A673 (cell line): ENCODE measurements at regions of chr12 and their contacts with region 1.

Region 1: DNA sequence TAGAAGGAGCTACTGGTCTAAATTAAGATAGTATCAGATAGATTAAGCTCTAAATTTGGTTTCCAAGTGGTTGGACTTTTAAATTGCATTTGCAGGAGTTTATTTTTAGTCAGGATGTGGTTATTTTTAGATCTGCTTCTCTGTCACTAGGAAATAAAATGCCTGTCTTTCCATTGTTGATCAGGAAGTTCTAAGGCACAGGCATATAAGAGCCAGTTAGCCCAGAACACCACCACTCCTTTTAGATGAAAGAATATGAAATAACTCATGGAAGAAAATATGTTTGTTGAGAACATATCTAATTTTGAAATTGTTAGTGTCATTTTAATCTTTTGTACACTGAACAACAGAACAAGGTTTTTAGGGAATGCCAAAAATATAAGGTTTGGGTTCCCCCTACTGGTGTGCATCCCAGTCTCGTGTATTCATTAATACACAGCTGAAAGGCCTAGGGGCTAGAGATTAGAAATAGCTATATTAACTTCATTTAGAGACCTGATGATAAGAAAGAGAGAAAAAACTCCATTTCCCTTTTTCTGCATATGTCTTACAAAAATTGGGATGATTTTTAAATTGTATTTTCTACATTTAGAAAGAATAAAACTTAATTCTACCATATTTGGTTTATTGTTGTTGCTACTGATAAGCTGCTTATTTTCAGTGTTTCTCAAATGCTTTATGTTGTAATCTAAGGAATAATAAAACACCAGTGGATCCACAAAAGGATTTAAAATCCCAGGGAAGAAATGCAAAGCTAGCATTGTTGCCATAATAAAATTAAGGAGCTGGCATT is 67.2 kb downstream of the RIC8B start:
- DNase-seq: peak; percentile 73
- H3K4me3 ChIP-seq: no peak overlapping the region
- H3K27ac ChIP-seq: peak overlapping the region; percentile 67
- H3K4me1 ChIP-seq: peaks cover 28% of the 10 kb centered on the region
- H3K27me3 ChIP-seq: no peaks in the 10 kb centered on the region
- CTCF ChIP-seq: peak; percentile 86

Region 2: GRCh38 chr12:106357549-106358395 is 483.9 kb before region 1 on chr12 and contains the start of gene POLR3B:
- CTCF ChIA-PET with region 1: interaction called, 14 read pairs
- POLR2A ChIA-PET with region 1: no interaction called
- intact Hi-C with region 1: no loop called
- DNase-seq: peak; percentile 97
- H3K4me3 ChIP-seq: peak within 1 kb of the TSS; percentile 70
- H3K27ac ChIP-seq: peak within 1 kb of the TSS; percentile 89
- H3K4me1 ChIP-seq: peaks cover 8% of the 10 kb centered on the region
- H3K27me3 ChIP-seq: no peaks in the 10 kb centered on the region
- CTCF ChIP-seq: peak; percentile 92
- total RNA-seq, gene POLR3B: 13.7 and 14.8 TPM in 2 replicates

Region 3: DNA sequence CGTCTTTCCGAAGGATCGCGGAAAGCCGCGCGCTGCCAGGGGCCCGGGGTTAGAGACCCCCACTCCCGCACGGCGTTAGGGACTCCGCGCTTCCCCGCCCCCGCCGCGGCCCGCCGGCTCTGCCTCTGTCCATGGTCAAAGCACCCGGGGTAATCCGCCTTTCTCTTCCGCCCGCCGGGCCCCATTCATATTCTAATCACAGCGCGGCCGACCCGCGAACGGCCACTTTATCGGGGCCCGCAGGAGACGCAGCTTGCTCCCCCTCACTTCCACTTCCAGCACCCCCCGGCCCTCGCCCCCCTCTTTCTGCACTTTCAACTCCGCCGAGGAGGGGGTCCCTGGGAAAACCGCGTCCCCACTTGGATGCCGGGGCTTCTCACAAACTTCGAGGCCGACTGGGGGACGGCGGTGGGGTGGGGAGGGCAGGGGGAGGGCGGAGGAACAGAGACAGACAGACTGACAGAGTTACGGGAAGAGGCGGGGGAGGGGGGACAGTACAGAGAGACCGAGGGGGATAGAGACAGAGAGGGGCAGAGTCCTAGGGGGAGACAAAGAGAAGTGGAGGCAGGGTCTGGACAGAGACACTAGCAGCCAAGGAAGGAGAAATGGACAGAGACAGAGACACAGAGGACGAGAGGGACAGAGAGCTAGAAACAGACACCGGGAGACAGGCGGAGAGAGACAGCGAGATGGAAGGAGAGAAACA is 260.0 kb before region 1 on chr12:
- CTCF ChIA-PET with region 1: no interaction called
- POLR2A ChIA-PET with region 1: no interaction called
- intact Hi-C with region 1: loop called (anchors 5 kb)
- DNase-seq: no peak
- H3K4me3 ChIP-seq: no peak overlapping the region
- H3K27ac ChIP-seq: no peak overlapping the region
- H3K4me1 ChIP-seq: peaks cover 5% of the 10 kb centered on the region
- H3K27me3 ChIP-seq: peaks cover 81% of the 10 kb centered on the region
- CTCF ChIP-seq: no peak

Region 4: GRCh38 chr12:107027636-107028053 is 185.9 kb after region 1 on chr12:
- CTCF ChIA-PET with region 1: no interaction called
- POLR2A ChIA-PET with region 1: no interaction called
- intact Hi-C with region 1: no loop called
- DNase-seq: peak; percentile 25
- H3K4me3 ChIP-seq: no peak overlapping the region
- H3K27ac ChIP-seq: no peak overlapping the region
- H3K4me1 ChIP-seq: peaks cover 7% of the 10 kb centered on the region
- H3K27me3 ChIP-seq: no peaks in the 10 kb centered on the region
- CTCF ChIP-seq: no peak